Dorsolateral prefrontal cortex (tissue), 120 donors: ENCODE measurements at regions of chr7 and their contacts with region 1.

Region 1: DNA sequence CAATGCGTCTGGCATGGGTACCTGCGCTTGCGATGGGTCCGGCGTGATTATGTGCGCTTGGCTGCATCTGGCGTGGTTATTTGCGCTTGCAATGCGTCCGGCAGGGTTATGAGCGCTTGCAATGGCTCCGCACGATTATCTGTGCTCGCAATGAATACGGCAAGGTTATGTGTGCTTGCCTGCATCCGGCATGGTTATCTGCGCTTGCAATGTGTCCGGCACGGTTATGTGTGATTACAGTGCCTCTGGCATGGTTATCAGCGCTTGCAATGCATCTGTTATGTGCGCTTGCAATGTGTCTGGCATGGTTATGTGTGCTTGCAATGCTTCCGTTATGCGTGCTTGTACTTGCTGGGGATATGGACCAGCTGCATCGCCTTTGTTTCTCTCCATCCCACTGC is 37.7 kb downstream of the RBAK start:
- DNase-seq: no peak
- H3K4me3 ChIP-seq: peak overlapping the region in 1 of 59 donors; percentile 12
- H3K27ac ChIP-seq: no peak overlapping the region
- H3K27me3 ChIP-seq: peaks cover 0 to 12% (median 0%) of the 10 kb centered on the region in 45 donors
- CTCF ChIP-seq: no peak

Region 2: GRCh38 chr7:4797858-4798705 is 285.2 kb before region 1 on chr7:
- intact Hi-C with region 1: loop called (anchors 2 to 5 kb)
- DNase-seq: peak in 7 of 10 donors; percentile 21 to 79 (median 49)
- H3K4me3 ChIP-seq: peak overlapping the region in 1 of 59 donors; percentile 6
- H3K27ac ChIP-seq: peak overlapping the region in 8 of 59 donors; percentile 9 to 57 (median 36)
- H3K27me3 ChIP-seq: no peaks in the 10 kb centered on the region
- CTCF ChIP-seq: peak; percentile 60 to 98 (median 88)

Region 3: GRCh38 chr7:4849369-4849768 is 233.9 kb before region 1 on chr7:
- intact Hi-C with region 1: loop called (anchors 2 to 10 kb)
- DNase-seq: peak in 4 of 10 donors; percentile 23 to 52 (median 46)
- H3K4me3 ChIP-seq: no peak overlapping the region
- H3K27ac ChIP-seq: no peak overlapping the region
- H3K27me3 ChIP-seq: no peaks in the 10 kb centered on the region
- CTCF ChIP-seq: peak in 51 of 56 donors; percentile 32 to 71 (median 51)

Region 4: GRCh38 chr7:4973728-4974198 is 109.5 kb before region 1 on chr7:
- intact Hi-C with region 1: loop called (anchors 2 to 10 kb)
- DNase-seq: peak; percentile 77 to 95 (median 88)
- H3K4me3 ChIP-seq: peak overlapping the region; percentile 55 to 94 (median 79)
- H3K27ac ChIP-seq: peak overlapping the region; percentile 23 to 92 (median 81)
- H3K27me3 ChIP-seq: no peaks in the 10 kb centered on the region
- CTCF ChIP-seq: peak; percentile 53 to 92 (median 81)